Adrenal gland (tissue), 19 donors: ENCODE measurements at regions of chr1 and their contacts with region 1.

Region 1: DNA sequence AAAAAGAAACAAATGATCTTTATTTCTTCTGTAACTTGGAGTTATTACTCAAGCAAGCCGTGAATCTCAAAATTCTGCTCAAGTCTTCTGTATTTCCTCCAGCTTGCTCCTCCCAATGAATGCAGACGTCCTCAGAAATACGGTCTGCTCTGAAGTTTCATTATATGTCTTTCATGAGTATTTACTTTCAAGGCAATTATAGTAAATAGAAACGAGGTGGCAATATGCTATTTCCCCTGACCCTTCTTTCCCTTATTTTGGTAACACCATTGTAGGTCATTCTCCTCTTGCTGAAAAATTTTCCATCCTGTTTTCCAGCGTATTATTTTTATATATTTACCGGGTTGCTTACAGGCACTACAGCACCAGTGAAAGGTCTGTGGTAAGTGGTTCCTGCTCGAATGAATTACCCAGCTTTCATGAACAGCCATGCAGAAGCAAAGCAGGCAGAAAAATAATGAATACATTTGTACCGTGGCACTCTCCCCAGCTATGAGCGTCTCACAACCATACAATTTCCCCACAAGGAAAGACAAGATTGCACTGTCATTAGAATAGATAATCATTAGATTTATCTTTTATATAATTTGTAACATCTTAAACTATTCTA is 350.9 kb upstream of the PKN2 start:
- DNase-seq: no peak
- H3K4me3 ChIP-seq: no peak overlapping the region
- H3K27ac ChIP-seq: no peak overlapping the region
- H3K4me1 ChIP-seq: no peaks in the 10 kb centered on the region
- H3K27me3 ChIP-seq: no peaks in the 10 kb centered on the region
- CTCF ChIP-seq: no peak
- POLR2A ChIP-seq: no peak

Region 2: GRCh38 chr1:88350648-88351047 is 17.5 kb after region 1 on chr1:
- intact Hi-C with region 1: loop called in 1 of 2 experiments (anchors 2 kb)
- DNase-seq: no peak
- H3K4me3 ChIP-seq: no peak overlapping the region
- H3K27ac ChIP-seq: no peak overlapping the region
- H3K4me1 ChIP-seq: no peaks in the 10 kb centered on the region
- H3K27me3 ChIP-seq: no peaks in the 10 kb centered on the region
- CTCF ChIP-seq: no peak
- POLR2A ChIP-seq: no peak